H1 (cell line): ENCODE measurements at regions of chr22 and their contacts with region 1.

Region 1: DNA sequence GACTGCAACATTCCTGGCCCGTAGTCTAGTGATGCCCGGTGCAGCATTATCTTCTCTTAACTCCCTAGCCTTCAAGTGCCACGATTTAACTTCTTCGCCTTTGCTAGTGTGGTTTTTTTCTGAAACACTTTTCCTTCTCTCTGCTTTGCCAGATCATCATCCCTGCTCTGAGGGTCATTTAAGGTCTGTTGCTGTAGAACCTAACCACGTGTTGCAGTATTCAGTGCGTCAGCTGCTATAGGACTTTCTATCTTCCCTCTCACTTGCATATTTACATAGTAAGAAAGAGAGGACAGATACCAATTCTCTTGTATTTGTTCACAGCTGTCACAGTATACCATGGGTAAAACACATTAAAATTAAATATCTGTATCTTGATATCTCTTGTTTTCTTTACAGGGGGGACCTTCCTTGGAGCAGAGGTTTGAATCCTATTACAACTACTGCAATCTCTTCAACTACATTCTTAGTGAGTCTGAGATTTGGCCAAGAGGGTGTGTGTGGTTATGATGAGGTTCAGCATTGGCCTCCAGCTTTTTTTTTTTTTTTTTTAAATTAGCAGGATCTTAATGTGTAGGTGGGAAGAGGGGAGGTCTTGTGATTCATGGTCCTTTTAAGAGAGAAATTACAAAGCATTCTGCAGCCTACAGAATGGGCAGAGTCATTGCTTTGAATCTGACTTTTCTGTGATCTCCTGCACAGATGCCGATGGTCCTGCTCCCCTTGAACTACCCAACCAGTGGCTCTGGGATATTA is 13.5 kb downstream of the EIF3L start:
- DNase-seq: no peak
- H3K4me3 ChIP-seq: no peak overlapping the region
- H3K27ac ChIP-seq: 0 out of 2 replicates have a peak overlapping the region, but pooled peaks have one; percentile 22
- H3K4me1 ChIP-seq: no peaks in the 10 kb centered on the region
- H3K27me3 ChIP-seq: no peaks in the 10 kb centered on the region
- CTCF ChIP-seq: no peak
- EP300 ChIP-seq: no peak
- POLR2A ChIP-seq: no peak; a peak in 1 of 3 replicates
- RAD21 ChIP-seq: no peak

Region 2: DNA sequence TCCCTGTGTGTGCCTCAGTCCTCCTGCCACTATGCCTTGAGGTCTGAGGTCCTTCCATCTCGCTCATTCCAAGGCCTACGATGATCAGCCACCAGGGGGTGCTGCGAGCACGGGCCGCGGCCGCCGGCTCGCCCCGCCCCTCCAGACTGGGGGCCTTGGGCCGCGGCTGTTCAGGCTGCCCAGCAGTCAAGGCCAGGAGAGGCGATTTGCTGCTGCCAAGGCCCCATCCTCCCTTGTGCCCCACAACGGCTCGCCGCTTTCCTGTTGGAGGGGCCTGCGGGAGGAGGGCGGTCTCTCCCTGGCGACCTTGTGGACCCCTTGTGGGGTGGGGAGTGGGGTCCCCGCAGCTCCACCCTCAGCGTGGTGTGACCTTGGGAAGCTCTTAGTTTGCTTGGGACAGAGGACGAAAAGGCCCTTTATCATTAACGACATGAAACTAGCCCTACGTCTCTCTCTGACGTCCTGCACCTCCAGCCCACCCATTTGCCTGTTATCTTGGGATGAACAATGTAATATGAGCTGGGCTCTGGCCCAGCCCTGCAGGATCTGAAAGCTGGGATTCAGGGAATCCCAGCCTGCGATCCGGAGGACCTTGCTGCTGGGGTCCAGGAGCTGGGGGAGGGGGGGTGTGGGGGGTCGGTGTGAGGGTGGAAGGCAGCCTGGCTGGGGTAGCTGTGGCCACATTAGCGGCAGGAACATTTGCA is 44.9 kb before region 1 on chr22:
- CTCF ChIA-PET with region 1: interaction called, 80 read pairs
- POLR2A ChIA-PET with region 1: interaction called, 42 read pairs
- DNase-seq: peak in 1 of 2 experiments; percentile 99
- H3K4me3 ChIP-seq: peak overlapping the region; percentile 35 to 60 (median 47)
- H3K27ac ChIP-seq: peak overlapping the region; percentile 44; the same call in 1 of the 2 replicates
- H3K4me1 ChIP-seq: peaks cover 3 to 25% (median 19%) of the 10 kb centered on the region in 4 experiments
- H3K27me3 ChIP-seq: peaks cover 0 to 23% (median 20%) of the 10 kb centered on the region in 4 experiments; a peak in 6 of 7 replicates
- CTCF ChIP-seq: peak; percentile 90 to 94 (median 93)
- EP300 ChIP-seq: no peak
- POLR2A ChIP-seq: peak in 1 of 2 experiments; percentile 60; a peak in 1 of 3 replicates
- RAD21 ChIP-seq: peak; percentile 91 to 92

Region 3: DNA sequence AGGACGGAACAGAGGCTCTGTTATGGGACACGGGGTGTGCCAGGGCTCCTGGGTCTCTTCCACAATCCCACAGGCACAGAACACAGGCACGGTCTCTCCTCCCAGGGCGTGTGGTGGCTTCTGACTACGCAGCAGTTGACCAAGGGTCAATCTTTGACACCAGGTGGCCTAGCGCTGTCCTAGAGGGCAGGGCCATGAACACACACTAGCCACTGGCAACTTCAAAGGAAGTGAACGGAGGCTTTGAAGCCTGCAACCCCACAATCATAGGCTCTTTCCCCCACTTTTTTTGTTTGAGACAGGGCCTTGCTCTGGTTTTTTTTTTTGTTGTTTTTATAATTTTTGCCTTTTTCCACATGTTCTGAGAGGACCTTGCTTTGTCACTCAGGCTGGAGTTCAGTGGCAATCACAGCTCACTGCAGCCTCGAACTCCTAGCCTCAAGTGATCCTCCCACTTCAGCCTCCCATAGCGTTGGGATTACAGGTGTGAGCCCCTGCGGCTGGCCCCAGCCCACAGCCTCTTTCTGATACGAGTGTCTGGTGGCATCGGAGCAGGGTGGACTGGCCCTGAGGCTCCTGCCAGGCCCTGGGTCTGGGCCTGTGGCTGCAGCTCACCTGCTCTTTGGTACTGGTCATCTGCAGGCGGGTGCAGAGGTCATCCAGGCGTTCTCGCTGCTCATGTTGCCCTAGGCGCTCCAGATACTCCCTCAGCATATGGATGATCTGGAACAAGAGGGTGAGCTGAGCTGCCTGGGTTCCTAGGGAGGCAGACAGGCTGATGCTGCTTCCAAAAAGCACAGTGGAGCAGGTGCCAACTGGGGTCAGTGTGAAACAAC is 30.5 kb before region 1 on chr22:
- CTCF ChIA-PET with region 1: interaction called, 14 read pairs
- POLR2A ChIA-PET with region 1: interaction called, 4 read pairs
- DNase-seq: no peak
- H3K4me3 ChIP-seq: no peak overlapping the region
- H3K27ac ChIP-seq: no peak overlapping the region
- H3K4me1 ChIP-seq: no peaks in the 10 kb centered on the region
- H3K27me3 ChIP-seq: no peaks in the 10 kb centered on the region
- CTCF ChIP-seq: no peak
- EP300 ChIP-seq: no peak
- POLR2A ChIP-seq: no peak
- RAD21 ChIP-seq: no peak

Region 4: DNA sequence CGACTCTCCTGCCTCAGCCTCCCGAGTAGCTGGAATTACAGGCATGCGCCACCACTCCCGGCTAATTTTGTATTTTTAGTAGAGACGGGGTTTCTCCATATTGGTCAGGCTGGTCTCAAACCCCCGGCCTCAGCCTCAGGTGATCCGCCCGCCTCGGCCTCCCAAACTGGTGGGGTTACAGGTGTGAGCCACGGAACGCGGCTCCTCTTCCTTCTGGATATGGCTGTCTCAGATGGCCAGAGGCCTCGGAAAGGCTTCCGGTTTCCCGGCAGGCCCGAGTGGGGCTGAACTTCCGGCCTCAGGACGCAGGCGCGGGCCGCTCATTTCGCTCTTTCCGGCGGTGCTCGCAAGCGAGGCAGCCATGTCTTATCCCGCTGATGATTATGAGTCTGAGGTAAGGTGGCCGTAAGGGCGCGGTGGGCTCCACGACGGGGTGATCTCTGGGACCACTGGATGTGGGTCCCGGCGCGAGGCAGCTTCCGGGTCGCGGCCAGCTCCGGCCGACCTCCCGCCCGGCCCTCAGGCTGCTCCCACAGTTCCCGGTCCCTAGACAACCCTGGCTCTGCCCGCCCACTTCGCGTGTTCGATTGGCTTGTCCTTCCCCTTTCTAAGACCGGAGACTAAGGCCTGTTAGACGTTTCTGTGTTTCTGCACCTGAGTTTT is 13.5 kb before region 1 on chr22 and contains the start of gene EIF3L:
- CTCF ChIA-PET with region 1: interaction called, 38 read pairs
- POLR2A ChIA-PET with region 1: interaction called, 24 read pairs
- DNase-seq: peak; percentile 68 to 90
- H3K4me3 ChIP-seq: peak within 1 kb of the TSS; percentile 96 to 99 (median 98)
- H3K27ac ChIP-seq: peak within 1 kb of the TSS; percentile 86
- H3K4me1 ChIP-seq: peaks cover 0 to 2% (median 2%) of the 10 kb centered on the region in 4 experiments; a peak in 3 of 7 replicates
- H3K27me3 ChIP-seq: no peaks in the 10 kb centered on the region
- CTCF ChIP-seq: no peak
- EP300 ChIP-seq: no peak
- POLR2A ChIP-seq: peak; percentile 89 to 98
- RAD21 ChIP-seq: no peak
- total RNA-seq, gene EIF3L: 622 and 639 TPM in 2 replicates